ENCODE measurements at regions of chr1 and their contacts with region 1.

Region 1: GRCh38 chr1:159945483-159946241 is at the start of gene IGSF9:
- DNase-seq: peak; percentile 88
- ATAC-seq: peak; percentile 92
- total RNA-seq, gene IGSF9: 0.30 TPM

Region 2: GRCh38 chr1:159600894-159601293 is 344.8 kb before region 1 on chr1:
- intact Hi-C with region 1: no loop called
- DNase-seq: no peak
- ATAC-seq: no peak

Region 3: DNA sequence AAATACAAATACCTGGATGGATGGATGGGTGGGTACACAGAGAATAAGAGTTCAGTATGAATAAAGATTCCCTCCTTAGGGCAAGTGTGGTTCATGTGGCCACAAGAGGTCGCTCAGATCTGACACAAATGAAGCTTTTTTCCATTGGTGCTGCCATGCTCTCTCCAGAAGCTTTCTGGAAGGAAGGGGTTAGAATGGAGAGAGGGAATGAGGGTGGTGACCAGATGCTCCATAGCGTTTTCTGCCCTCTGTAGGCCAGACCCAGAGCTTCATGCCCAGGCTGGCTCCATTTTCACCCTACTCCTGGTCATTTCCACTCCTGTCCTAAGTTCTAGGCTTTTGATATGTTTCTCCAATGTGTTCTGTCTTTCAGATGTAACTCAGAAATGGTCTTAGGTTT is 146.8 kb before region 1 on chr1:
- intact Hi-C with region 1: loop called (anchors 2 kb)
- DNase-seq: no peak
- ATAC-seq: peak; percentile 83

Region 4: DNA sequence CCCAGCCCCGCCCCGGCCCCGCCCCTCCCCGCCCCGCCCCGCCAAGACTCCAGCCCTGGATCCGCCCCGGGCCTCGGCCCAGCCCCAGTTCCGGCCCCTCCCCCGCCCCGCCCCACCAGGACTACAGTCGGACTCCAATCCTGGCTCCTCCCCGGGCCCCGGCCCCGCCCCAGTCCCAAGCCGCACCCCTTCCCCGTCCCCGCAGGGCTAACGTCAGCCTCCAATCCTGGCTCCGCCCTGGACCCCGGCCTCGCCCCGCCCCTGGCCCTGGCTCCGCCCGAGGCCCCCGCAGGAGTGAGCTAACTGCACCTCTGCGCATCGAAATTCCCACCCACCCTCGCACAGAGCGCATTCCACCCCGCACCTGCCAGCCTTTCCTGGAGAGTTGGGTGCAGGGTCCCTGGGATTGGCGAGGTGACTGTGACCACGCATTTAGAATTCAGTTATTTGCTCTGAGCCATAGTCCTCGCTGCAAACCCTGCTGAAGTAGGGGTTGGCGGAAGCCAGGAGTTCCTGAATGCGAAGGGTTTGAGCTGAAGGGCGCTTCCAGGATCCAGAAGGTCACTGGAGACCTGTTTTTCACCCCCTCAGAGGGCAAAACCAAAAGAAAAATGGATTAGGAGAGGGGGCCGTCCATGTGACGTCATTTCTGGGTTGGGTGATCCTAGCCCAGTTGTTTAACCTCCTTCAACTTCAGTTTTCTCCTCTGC is 153.3 kb after region 1 on chr1:
- intact Hi-C with region 1: no loop called
- DNase-seq: peak; percentile 98
- ATAC-seq: peak; percentile 92

Region 5: GRCh38 chr1:160193091-160193819 is 247.6 kb after region 1 on chr1:
- intact Hi-C with region 1: no loop called
- DNase-seq: peak; percentile 90
- ATAC-seq: peak; percentile 87

Measured in Right ventricle myocardium inferior (tissue), 1 donor.